ENCODE measurements at regions of chr1 and their contacts with region 1.

Region 1: GRCh38 chr1:62841587-62842169 is 57.7 kb downstream of the ATG4C start:
- DNase-seq: no peak
- ATAC-seq: no peak
- H3K4me3 Mint-ChIP-seq: no peak overlapping the region
- H3K27ac Mint-ChIP-seq: no peak overlapping the region
- H3K4me1 Mint-ChIP-seq: no peaks in the 10 kb centered on the region
- H3K27me3 Mint-ChIP-seq: no peaks in the 10 kb centered on the region

Region 2: GRCh38 chr1:62744611-62745577 is 96.8 kb before region 1 on chr1:
- CTCF ChIA-PET with region 1: no interaction called
- POLR2A ChIA-PET with region 1: no interaction called
- intact Hi-C with region 1: no loop called
- DNase-seq: no peak
- ATAC-seq: no peak
- H3K4me3 Mint-ChIP-seq: no peak overlapping the region
- H3K27ac Mint-ChIP-seq: no peak overlapping the region
- H3K4me1 Mint-ChIP-seq: no peaks in the 10 kb centered on the region
- H3K27me3 Mint-ChIP-seq: peaks cover 7% of the 10 kb centered on the region

Region 3: DNA sequence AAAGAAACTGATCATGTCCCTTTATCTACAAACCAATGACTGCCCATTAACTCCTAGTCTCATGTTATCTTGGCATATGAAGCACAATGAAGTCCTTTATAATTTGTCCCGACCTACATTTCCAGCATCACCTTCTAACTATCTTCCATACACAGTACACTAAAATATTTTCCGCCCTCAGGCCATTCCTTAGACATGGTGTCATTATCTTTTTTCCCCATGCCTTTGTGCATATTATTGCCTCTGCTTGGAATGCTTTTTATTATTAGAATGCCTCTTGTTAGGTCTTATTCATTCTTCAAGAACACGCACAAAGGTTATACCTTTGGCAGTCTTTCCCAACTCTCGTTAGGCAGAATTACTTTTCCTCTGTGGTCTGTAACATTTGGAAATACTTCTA is 18.1 kb before region 1 on chr1:
- CTCF ChIA-PET with region 1: interaction called, 19 read pairs
- POLR2A ChIA-PET with region 1: no interaction called
- intact Hi-C with region 1: no loop called
- DNase-seq: no peak
- ATAC-seq: no peak
- H3K4me3 Mint-ChIP-seq: no peak overlapping the region
- H3K27ac Mint-ChIP-seq: no peak overlapping the region
- H3K4me1 Mint-ChIP-seq: no peaks in the 10 kb centered on the region
- H3K27me3 Mint-ChIP-seq: no peaks in the 10 kb centered on the region

Region 4: DNA sequence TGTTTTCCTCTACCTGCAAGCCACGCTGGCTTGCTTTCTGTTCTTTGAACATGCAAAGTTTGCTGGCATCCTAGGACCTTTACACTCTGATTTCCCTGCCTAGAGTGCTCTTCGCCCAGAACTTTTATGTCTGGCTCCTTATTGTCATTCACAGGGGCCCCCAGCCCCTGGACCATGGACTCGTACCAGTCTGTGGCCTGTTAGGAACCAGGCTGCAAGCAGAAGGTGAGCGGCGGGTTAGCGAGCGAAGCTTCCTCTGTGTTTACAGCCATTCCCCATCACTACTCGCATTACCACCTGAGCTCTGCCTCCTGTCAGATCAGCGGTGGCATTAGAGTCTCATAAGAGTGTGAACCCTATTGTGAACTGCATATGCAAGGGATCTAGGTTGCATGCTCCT is 15.3 kb after region 1 on chr1:
- CTCF ChIA-PET with region 1: interaction called, 12 read pairs
- POLR2A ChIA-PET with region 1: no interaction called
- intact Hi-C with region 1: no loop called
- DNase-seq: no peak
- ATAC-seq: no peak
- H3K4me3 Mint-ChIP-seq: no peak overlapping the region
- H3K27ac Mint-ChIP-seq: no peak overlapping the region
- H3K4me1 Mint-ChIP-seq: no peaks in the 10 kb centered on the region
- H3K27me3 Mint-ChIP-seq: no peaks in the 10 kb centered on the region

Region 5: DNA sequence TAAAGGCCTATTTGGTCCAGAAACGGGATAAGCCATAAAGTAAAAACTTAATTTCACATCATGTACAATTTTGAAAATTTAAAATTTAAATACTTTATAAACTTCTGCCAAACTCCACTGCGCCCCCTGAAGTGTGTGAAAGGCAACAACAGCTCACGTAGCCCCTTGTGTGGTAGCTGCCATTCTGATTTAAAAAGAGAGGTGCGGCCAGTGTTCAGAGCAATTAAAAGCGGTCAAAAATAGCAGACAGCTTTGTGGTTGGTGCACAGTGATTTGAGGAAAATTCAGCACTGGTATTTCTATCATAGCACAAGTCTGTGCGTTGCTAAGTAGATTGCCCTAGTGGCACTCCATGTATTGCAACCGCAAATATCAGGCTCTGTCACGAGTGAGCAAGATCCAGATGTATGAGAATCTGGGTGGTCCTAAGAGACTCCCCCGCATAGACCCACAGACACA is 64.8 kb after region 1 on chr1:
- CTCF ChIA-PET with region 1: interaction called, 4 read pairs
- POLR2A ChIA-PET with region 1: no interaction called
- intact Hi-C with region 1: loop called in 1 of 2 experiments (anchors 5 kb)
- DNase-seq: peak; percentile 11
- ATAC-seq: no peak
- H3K4me3 Mint-ChIP-seq: no peak overlapping the region
- H3K27ac Mint-ChIP-seq: no peak overlapping the region
- H3K4me1 Mint-ChIP-seq: peaks cover 9% of the 10 kb centered on the region
- H3K27me3 Mint-ChIP-seq: no peaks in the 10 kb centered on the region

Region 6: GRCh38 chr1:63148825-63149645 is 307.4 kb after region 1 on chr1:
- CTCF ChIA-PET with region 1: interaction called, 5 read pairs
- POLR2A ChIA-PET with region 1: no interaction called
- intact Hi-C with region 1: loop called in 1 of 2 experiments (anchors 2 kb)
- DNase-seq: peak; percentile 39
- ATAC-seq: no peak
- H3K4me3 Mint-ChIP-seq: no peak overlapping the region
- H3K27ac Mint-ChIP-seq: no peak overlapping the region
- H3K4me1 Mint-ChIP-seq: no peaks in the 10 kb centered on the region
- H3K27me3 Mint-ChIP-seq: peaks cover 9% of the 10 kb centered on the region

Region 7: GRCh38 chr1:63442141-63442475 is 600.4 kb after region 1 on chr1:
- CTCF ChIA-PET with region 1: no interaction called
- POLR2A ChIA-PET with region 1: no interaction called
- intact Hi-C with region 1: loop called (anchors 2 to 5 kb)
- DNase-seq: no peak
- ATAC-seq: no peak
- H3K4me3 Mint-ChIP-seq: no peak overlapping the region
- H3K27ac Mint-ChIP-seq: no peak overlapping the region
- H3K4me1 Mint-ChIP-seq: no peaks in the 10 kb centered on the region
- H3K27me3 Mint-ChIP-seq: no peaks in the 10 kb centered on the region

Region 8: DNA sequence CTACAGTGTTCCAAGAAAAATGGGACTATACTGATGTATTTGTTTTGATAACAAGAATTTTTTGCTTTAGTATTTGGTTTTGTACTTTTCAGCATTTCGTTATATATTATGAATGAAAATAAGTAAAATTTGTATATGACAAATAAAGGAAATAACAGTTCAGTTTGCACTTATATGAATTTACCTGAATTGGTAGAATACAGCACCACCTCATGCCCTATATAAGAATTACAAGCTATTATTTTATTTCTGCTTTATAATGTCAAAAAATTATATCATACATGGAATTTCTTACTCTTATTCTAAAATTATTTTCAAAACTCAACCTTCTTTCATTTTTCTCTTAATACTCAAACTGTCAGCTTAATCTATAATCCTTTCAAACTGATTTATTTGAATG is 696.3 kb after region 1 on chr1:
- CTCF ChIA-PET with region 1: interaction called, 7 read pairs
- POLR2A ChIA-PET with region 1: interaction called, 3 read pairs
- intact Hi-C with region 1: loop called (anchors 5 kb)
- DNase-seq: no peak
- ATAC-seq: no peak
- H3K4me3 Mint-ChIP-seq: no peak overlapping the region
- H3K27ac Mint-ChIP-seq: no peak overlapping the region
- H3K4me1 Mint-ChIP-seq: no peaks in the 10 kb centered on the region
- H3K27me3 Mint-ChIP-seq: no peaks in the 10 kb centered on the region

Measured in activated CD4-positive, alpha-beta T cell treated with anti-CD3 and anti-CD28 coated beads for 36 hours (primary cell).